ENCODE measurements at regions of chr6 and their contacts with region 1.

Region 1: GRCh38 chr6:90062667-90063066 is 168.4 kb downstream of the GJA10 start:
- DNase-seq: no peak
- ATAC-seq: peak; percentile 52 to 77 (median 64)
- H3K4me3 ChIP-seq: no peak overlapping the region
- H3K27ac ChIP-seq: peak overlapping the region; percentile 9
- H3K4me1 ChIP-seq: peaks cover 23% of the 10 kb centered on the region
- H3K27me3 ChIP-seq: no peaks in the 10 kb centered on the region
- CTCF ChIP-seq: no peak

Region 2: DNA sequence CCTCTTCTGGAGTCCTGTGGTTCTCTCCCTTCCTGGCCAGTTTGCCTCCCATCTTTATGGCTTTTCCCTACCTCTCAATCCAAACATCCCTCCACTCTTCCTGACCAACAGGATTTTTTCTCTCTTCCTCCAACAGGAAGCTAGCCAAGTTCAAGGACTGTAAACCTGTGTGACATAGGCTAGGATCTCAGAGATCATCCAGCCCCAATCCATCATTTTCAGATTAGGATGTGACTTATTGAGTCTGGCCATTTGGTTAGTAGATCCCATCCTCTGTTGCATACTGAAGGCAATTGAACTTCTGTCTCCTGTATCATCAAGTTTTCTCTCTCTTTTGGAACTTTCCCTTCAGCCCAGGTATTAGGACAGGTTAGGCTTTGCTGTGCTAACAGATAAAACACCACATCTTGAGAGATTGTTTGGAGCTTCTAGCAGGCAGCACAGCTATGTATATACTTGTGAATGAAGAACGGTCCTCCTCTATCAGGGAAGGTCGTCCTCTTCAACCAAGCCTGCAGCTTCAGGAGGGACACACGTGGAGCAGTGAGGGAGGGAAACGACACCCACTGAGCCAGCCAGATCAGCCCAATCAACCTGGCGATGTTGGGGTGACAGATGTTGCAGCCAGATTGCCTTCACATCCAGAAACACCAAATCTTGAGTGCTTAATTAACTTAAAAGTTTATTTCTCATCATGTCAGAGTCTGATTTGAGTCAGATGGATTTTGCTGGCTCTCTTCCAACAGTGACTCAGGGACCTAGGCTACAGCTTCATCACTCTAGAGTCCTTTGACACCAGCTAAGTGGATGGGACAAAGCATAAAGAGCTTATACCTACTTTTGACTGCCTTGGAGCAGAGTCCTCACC is 61.6 kb before region 1 on chr6:
- intact Hi-C with region 1: loop called in 1 of 2 experiments (anchors 5 kb)
- DNase-seq: no peak
- ATAC-seq: peak in 1 of 4 donors; percentile 35
- H3K4me3 ChIP-seq: no peak overlapping the region
- H3K27ac ChIP-seq: peak overlapping the region; percentile 15
- H3K4me1 ChIP-seq: peaks cover 30% of the 10 kb centered on the region
- H3K27me3 ChIP-seq: no peaks in the 10 kb centered on the region
- CTCF ChIP-seq: no peak